ENCODE measurements at regions of chr11 and their contacts with region 1.

Region 1: GRCh38 chr11:128342511-128343134 is 244.7 kb downstream of the ETS1 start:
- DNase-seq: peak; percentile 93
- H3K4me3 Mint-ChIP-seq: peak overlapping the region; percentile 66
- H3K27ac Mint-ChIP-seq: peak overlapping the region; percentile 88
- H3K4me1 Mint-ChIP-seq: peaks cover 88% of the 10 kb centered on the region
- H3K27me3 Mint-ChIP-seq: no peaks in the 10 kb centered on the region

Region 2: GRCh38 chr11:128232588-128232987 is 110.0 kb before region 1 on chr11:
- CTCF ChIA-PET with region 1: no interaction called
- POLR2A ChIA-PET with region 1: no interaction called
- intact Hi-C with region 1: loop called (anchors 1 kb)
- DNase-seq: peak; percentile 85
- H3K4me3 Mint-ChIP-seq: no peak overlapping the region
- H3K27ac Mint-ChIP-seq: peak overlapping the region; percentile 69
- H3K4me1 Mint-ChIP-seq: peaks cover 52% of the 10 kb centered on the region
- H3K27me3 Mint-ChIP-seq: no peaks in the 10 kb centered on the region

Region 3: GRCh38 chr11:128279866-128280265 is 62.8 kb before region 1 on chr11:
- CTCF ChIA-PET with region 1: no interaction called
- POLR2A ChIA-PET with region 1: no interaction called
- intact Hi-C with region 1: no loop called
- DNase-seq: no peak
- H3K4me3 Mint-ChIP-seq: no peak overlapping the region
- H3K27ac Mint-ChIP-seq: no peak overlapping the region
- H3K4me1 Mint-ChIP-seq: peaks cover 10% of the 10 kb centered on the region
- H3K27me3 Mint-ChIP-seq: no peaks in the 10 kb centered on the region

Region 4: DNA sequence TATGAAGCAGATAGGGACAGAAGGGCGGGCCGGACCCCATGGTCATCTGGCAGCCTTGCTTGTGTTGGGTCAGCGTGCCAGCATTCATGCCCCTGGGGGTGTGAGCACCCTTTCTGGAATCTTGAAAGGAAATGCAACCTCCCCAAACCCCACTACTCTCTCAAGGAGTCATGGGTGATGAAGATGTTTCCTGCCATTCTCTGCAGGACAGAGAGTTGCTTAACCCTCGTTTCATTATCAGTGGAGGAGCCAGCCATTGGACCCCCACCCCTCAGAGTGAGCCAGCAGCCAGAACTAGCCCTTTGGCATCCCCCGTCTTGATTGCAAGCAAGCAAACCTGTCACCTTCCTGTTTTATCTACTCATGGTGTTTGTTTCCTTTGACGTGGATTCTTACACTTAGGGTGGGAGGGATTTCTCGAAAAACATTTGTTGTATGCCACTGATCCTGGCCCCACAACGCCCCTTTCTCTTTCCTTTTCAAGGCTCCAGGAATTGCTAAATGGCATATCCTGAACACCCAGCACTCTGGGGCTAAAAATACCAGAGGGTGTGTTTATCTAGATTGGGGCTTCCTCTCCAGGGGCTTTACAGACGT is 13.6 kb before region 1 on chr11:
- CTCF ChIA-PET with region 1: interaction called, 49 read pairs
- POLR2A ChIA-PET with region 1: interaction called, 93 read pairs
- intact Hi-C with region 1: loop called (anchors 1 kb)
- DNase-seq: peak; percentile 76
- H3K4me3 Mint-ChIP-seq: peak overlapping the region; percentile 21
- H3K27ac Mint-ChIP-seq: peak overlapping the region; percentile 94
- H3K4me1 Mint-ChIP-seq: peaks cover 76% of the 10 kb centered on the region
- H3K27me3 Mint-ChIP-seq: no peaks in the 10 kb centered on the region

Region 5: GRCh38 chr11:128399251-128400121 is 56.9 kb after region 1 on chr11:
- CTCF ChIA-PET with region 1: interaction called, 5 read pairs
- POLR2A ChIA-PET with region 1: no interaction called
- intact Hi-C with region 1: loop called (anchors 2 kb)
- DNase-seq: peak; percentile 31
- H3K4me3 Mint-ChIP-seq: no peak overlapping the region
- H3K27ac Mint-ChIP-seq: peak overlapping the region; percentile 29
- H3K4me1 Mint-ChIP-seq: peaks cover 23% of the 10 kb centered on the region
- H3K27me3 Mint-ChIP-seq: no peaks in the 10 kb centered on the region

Region 6: GRCh38 chr11:128448200-128448886 is 105.7 kb after region 1 on chr11:
- CTCF ChIA-PET with region 1: no interaction called
- POLR2A ChIA-PET with region 1: no interaction called
- intact Hi-C with region 1: no loop called
- DNase-seq: no peak
- H3K4me3 Mint-ChIP-seq: no peak overlapping the region
- H3K27ac Mint-ChIP-seq: no peak overlapping the region
- H3K4me1 Mint-ChIP-seq: peaks cover 46% of the 10 kb centered on the region
- H3K27me3 Mint-ChIP-seq: no peaks in the 10 kb centered on the region

Region 7: GRCh38 chr11:128506999-128507611 is 164.5 kb after region 1 on chr11:
- CTCF ChIA-PET with region 1: interaction called, 3 read pairs
- POLR2A ChIA-PET with region 1: interaction called, 11 read pairs
- intact Hi-C with region 1: loop called (anchors 5 kb)
- DNase-seq: peak; percentile 74
- H3K4me3 Mint-ChIP-seq: peak overlapping the region; percentile 77
- H3K27ac Mint-ChIP-seq: peak overlapping the region; percentile 96
- H3K4me1 Mint-ChIP-seq: peaks cover 90% of the 10 kb centered on the region
- H3K27me3 Mint-ChIP-seq: no peaks in the 10 kb centered on the region

Measured in activated CD4-positive, alpha-beta memory T cell treated with anti-CD3 and anti-CD28 coated beads for 36 hours (primary cell).